ENCODE measurements at regions of chr6 and their contacts with region 1.

Region 1: GRCh38 chr6:114297135-114297534 is 45.7 kb downstream of the HS3ST5 start:
- DNase-seq: no peak
- H3K4me3 ChIP-seq: no peak overlapping the region
- H3K27ac ChIP-seq: no peak overlapping the region
- H3K4me1 ChIP-seq: no peaks in the 10 kb centered on the region
- H3K27me3 ChIP-seq: no peaks in the 10 kb centered on the region
- CTCF ChIP-seq: no peak
- POLR2A ChIP-seq: no peak

Region 2: DNA sequence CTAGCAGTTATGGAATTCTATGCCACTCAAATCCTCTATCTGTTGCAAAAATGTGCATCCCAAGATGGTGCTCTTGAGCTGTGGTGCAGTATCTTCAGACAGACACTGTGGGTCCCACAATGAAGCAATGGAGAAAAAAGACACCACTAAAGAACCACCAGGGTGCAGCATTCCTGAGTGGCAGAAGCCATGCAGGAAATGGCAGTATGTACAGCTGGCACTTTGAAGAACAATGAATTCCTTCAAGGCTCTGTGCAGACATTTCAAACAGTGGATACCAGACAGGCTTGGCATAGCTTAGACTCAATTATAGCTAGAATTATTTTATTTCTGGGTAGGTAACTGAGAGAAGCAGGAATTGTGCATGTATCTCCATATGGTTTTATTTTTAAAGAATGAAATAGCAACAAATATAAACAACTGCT is 302.2 kb before region 1 on chr6:
- intact Hi-C with region 1: loop called (anchors 5 kb)
- DNase-seq: no peak
- H3K4me3 ChIP-seq: no peak overlapping the region
- H3K27ac ChIP-seq: no peak overlapping the region
- H3K4me1 ChIP-seq: no peaks in the 10 kb centered on the region
- H3K27me3 ChIP-seq: no peaks in the 10 kb centered on the region
- CTCF ChIP-seq: no peak
- POLR2A ChIP-seq: no peak

Region 3: DNA sequence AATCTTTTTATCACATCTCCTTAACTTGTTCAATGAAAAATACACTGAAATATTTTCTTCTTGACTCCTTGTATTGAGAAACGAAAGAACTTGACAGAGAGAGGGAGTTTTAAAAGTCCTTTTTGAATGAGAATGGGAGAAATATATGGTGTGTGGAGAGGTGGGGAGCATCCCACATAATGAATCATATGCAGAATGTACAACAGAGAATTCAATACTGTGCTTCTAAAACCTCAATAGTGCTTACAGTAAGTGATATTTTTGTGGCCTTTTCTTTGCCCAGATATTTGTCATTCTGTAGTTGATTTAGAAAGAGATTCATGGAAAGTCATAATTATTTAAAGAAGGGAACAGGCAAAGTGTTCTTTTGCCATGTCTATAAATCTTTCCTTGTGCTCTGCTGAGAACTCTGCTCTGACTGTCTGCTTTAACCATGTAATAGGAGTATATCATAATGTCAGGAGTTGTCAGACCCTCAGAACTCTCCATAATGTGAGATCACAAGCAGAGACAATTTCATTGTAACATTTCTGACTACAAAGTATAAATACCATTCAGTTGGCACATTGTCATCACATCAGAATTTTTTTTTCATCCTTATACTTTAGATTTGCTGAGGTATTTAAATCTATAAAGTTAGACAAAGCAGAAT is 78.5 kb after region 1 on chr6:
- intact Hi-C with region 1: no loop called
- DNase-seq: no peak
- H3K4me3 ChIP-seq: no peak overlapping the region
- H3K27ac ChIP-seq: no peak overlapping the region
- H3K4me1 ChIP-seq: no peaks in the 10 kb centered on the region
- H3K27me3 ChIP-seq: no peaks in the 10 kb centered on the region
- CTCF ChIP-seq: no peak
- POLR2A ChIP-seq: no peak

Measured in breast epithelium (tissue), 4 donors.